ENCODE measurements at regions of chr11 and their contacts with region 1.

Region 1: GRCh38 chr11:9089634-9090033 is 1.8 kb downstream of the SCUBE2 start:
- DNase-seq: no peak
- H3K4me3 ChIP-seq: no peak overlapping the region
- H3K27me3 ChIP-seq: peaks cover 3% of the 10 kb centered on the region; the same call in 1 of the 2 replicates
- CTCF ChIP-seq: no peak

Region 2: GRCh38 chr11:9078113-9079086 is 11.2 kb before region 1 on chr11:
- CTCF ChIA-PET with region 1: interaction called, 10 read pairs
- POLR2A ChIA-PET with region 1: no interaction called
- DNase-seq: no peak
- H3K4me3 ChIP-seq: no peak overlapping the region
- H3K27me3 ChIP-seq: no peaks in the 10 kb centered on the region
- CTCF ChIP-seq: peak; percentile 13; the same call in 1 of the 2 replicates

Measured in BJ (cell line).